GM12878 (cell line): ENCODE measurements at regions of chrX and their contacts with region 1.

Region 1: GRCh38 chrX:13699183-13699826 is 10.4 kb downstream of the RAB9A start:
- DNase-seq: no peak
- ATAC-seq: peak; percentile 53
- H3K4me3 ChIP-seq: peak overlapping the region; percentile 37; the same call in 1 of the 2 replicates
- H3K27ac ChIP-seq: peak overlapping the region; percentile 69
- H3K4me1 ChIP-seq: peaks cover 38% of the 10 kb centered on the region
- H3K27me3 ChIP-seq: no peaks in the 10 kb centered on the region
- CTCF ChIP-seq: no peak
- EP300 ChIP-seq: no peak
- POLR2A ChIP-seq: no peak
- RAD21 ChIP-seq: no peak

Region 2: DNA sequence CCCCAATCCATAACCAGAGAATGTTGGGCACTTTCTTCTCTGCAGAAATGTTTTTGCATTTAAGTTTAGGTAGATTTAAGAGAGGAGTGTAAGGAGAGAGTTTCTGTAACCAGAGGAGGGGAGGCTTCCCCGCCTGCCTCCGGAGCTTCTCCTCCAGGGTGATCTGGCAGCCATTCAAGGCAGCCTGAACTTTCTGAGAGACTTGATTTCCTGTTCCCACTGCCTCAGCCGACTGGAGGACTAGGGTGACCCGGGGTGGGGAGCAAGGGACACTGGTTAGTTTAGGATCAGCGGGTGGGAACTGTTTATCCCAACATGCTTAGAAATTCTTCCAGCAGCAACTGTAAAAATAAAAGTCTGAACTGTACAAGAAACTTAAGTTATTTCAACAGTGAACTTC is 670.0 kb before region 1 on chrX:
- CTCF ChIA-PET with region 1: no interaction called
- POLR2A ChIA-PET with region 1: no interaction called
- RAD21 ChIA-PET with region 1: no interaction called
- SMC1A ChIA-PET with region 1: no interaction called
- in situ Hi-C with region 1: no loop called
- intact Hi-C with region 1: no loop called
- DNase-seq: no peak
- ATAC-seq: peak; percentile 21
- H3K4me3 ChIP-seq: no peak overlapping the region
- H3K27ac ChIP-seq: peak overlapping the region; percentile 83
- H3K4me1 ChIP-seq: peaks cover 45% of the 10 kb centered on the region
- H3K27me3 ChIP-seq: no peaks in the 10 kb centered on the region
- CTCF ChIP-seq: no peak
- EP300 ChIP-seq: no peak
- POLR2A ChIP-seq: no peak
- RAD21 ChIP-seq: no peak

Region 3: DNA sequence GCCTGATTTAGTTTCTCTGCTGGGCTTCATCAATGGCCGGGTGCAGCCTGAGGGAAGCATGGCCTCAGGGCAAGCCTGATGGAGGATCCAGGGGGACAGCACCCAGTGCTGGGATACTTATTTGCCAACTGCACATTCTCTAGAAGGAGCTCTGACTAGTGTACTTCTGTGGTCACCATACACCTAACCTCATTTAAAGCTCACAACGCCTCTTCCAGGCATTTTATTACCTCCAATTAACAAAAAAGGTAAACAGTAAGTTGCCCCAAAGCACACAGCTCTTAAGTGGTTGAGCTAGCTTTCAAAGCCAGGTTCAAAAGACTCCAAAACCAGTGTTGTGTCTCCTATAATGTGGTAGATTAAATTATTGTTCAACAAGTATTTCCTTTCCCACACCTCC is 352.7 kb before region 1 on chrX:
- CTCF ChIA-PET with region 1: no interaction called
- POLR2A ChIA-PET with region 1: no interaction called
- RAD21 ChIA-PET with region 1: no interaction called
- SMC1A ChIA-PET with region 1: no interaction called
- in situ Hi-C with region 1: no loop called
- intact Hi-C with region 1: no loop called
- DNase-seq: no peak
- ATAC-seq: no peak
- H3K4me3 ChIP-seq: no peak overlapping the region
- H3K27ac ChIP-seq: no peak overlapping the region
- H3K4me1 ChIP-seq: peaks cover 3% of the 10 kb centered on the region; the same call in 1 of the 2 replicates
- H3K27me3 ChIP-seq: no peaks in the 10 kb centered on the region
- CTCF ChIP-seq: no peak
- EP300 ChIP-seq: no peak
- POLR2A ChIP-seq: no peak
- RAD21 ChIP-seq: no peak

Region 4: GRCh38 chrX:13669246-13669737 is 30.0 kb before region 1 on chrX:
- CTCF ChIA-PET with region 1: interaction called, 21 read pairs
- POLR2A ChIA-PET with region 1: interaction called, 45 read pairs
- RAD21 ChIA-PET with region 1: interaction called, 103 read pairs
- SMC1A ChIA-PET with region 1: interaction called, 136 read pairs
- in situ Hi-C with region 1: no loop called
- intact Hi-C with region 1: loop called (anchors 2 kb)
- DNase-seq: peak; percentile 89
- ATAC-seq: peak; percentile 77
- H3K4me3 ChIP-seq: peak overlapping the region; percentile 44; the same call in 1 of the 2 replicates
- H3K27ac ChIP-seq: peak overlapping the region; percentile 92
- H3K4me1 ChIP-seq: peaks cover 37% of the 10 kb centered on the region
- H3K27me3 ChIP-seq: no peaks in the 10 kb centered on the region
- CTCF ChIP-seq: no peak
- EP300 ChIP-seq: peak; percentile 91 to 92
- POLR2A ChIP-seq: no peak
- RAD21 ChIP-seq: 0 out of 2 replicates have a peak, but pooled peaks have one; percentile 15

Region 5: GRCh38 chrX:13734278-13735172 is 35.2 kb after region 1 on chrX and contains the starts of genes OFD1 and TRAPPC2:
- CTCF ChIA-PET with region 1: interaction called, 89 read pairs
- POLR2A ChIA-PET with region 1: interaction called, 130 read pairs
- RAD21 ChIA-PET with region 1: interaction called, 201 read pairs
- SMC1A ChIA-PET with region 1: interaction called, 198 read pairs
- in situ Hi-C with region 1: no loop called
- intact Hi-C with region 1: no loop called
- DNase-seq: peak; percentile 96
- ATAC-seq: peak; percentile 92
- H3K4me3 ChIP-seq: peak within 1 kb of the TSS; percentile 78
- H3K27ac ChIP-seq: peak within 1 kb of the TSS; percentile 87
- H3K4me1 ChIP-seq: no peaks in the 10 kb centered on the region
- H3K27me3 ChIP-seq: no peaks in the 10 kb centered on the region
- CTCF ChIP-seq: no peak
- EP300 ChIP-seq: 0 out of 4 replicates have a peak, but pooled peaks of 1 of the 2 experiments have one; percentile 24
- POLR2A ChIP-seq: peak; percentile 87
- RAD21 ChIP-seq: no peak
- polyA plus RNA-seq, gene OFD1: 43.0 to 64.5 TPM
- polyA plus RNA-seq, gene TRAPPC2: 18.3 to 27.5 TPM

Region 6: GRCh38 chrX:13764765-13765164 is 65.5 kb after region 1 on chrX:
- CTCF ChIA-PET with region 1: no interaction called
- POLR2A ChIA-PET with region 1: interaction called, 31 read pairs
- RAD21 ChIA-PET with region 1: interaction called, 175 read pairs
- SMC1A ChIA-PET with region 1: interaction called, 21 read pairs
- in situ Hi-C with region 1: no loop called
- intact Hi-C with region 1: no loop called
- DNase-seq: no peak
- ATAC-seq: no peak
- H3K4me3 ChIP-seq: no peak overlapping the region
- H3K27ac ChIP-seq: no peak overlapping the region
- H3K4me1 ChIP-seq: peaks cover 14% of the 10 kb centered on the region
- H3K27me3 ChIP-seq: no peaks in the 10 kb centered on the region
- CTCF ChIP-seq: no peak
- EP300 ChIP-seq: no peak
- POLR2A ChIP-seq: no peak
- RAD21 ChIP-seq: no peak